HepG2 (cell line): ENCODE measurements at regions of chr6 and their contacts with region 1.

Region 1: DNA sequence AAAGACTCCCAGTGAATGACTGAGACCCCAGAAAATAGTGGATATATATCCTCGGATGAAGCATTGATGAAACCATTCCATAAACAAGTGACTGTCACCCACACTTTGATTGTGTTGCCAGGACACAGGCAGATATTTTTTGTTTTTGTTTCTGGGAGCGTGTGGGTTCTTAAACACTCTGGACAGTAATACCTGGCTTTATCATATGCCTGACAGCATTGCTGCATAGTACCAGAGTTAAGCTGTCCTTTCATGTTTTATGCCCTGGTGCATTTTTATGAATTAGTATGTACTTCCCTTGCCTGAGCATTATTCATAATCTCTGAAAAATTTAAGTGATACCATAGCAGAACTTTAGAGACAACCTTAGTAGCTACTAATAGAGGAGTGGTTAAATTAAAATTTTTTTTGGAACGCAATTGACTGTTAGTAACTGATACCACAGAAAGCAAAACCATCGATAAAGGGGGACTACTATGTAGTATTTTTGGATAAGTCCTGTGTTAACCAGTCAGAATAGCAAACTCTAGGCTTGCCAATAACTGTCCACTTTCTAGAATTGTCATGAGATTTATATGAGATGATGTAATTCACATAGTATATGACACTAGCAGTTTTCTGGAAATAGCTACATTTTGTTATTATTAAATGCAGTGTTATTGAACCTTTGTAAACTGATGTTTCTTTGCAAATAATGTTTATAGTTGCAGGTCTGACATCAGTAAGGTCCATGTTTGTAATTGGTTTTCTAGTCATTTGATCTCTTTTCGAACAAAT is 30.4 kb downstream of the SENP6 start:
- DNase-seq: no peak
- ATAC-seq: no peak
- H3K4me3 ChIP-seq: no peak overlapping the region
- H3K27ac ChIP-seq: no peak overlapping the region
- H3K4me1 ChIP-seq: no peaks in the 10 kb centered on the region
- H3K27me3 ChIP-seq: no peaks in the 10 kb centered on the region
- CTCF ChIP-seq: no peak
- EP300 ChIP-seq: no peak
- POLR2A ChIP-seq: no peak
- RAD21 ChIP-seq: no peak

Region 2: DNA sequence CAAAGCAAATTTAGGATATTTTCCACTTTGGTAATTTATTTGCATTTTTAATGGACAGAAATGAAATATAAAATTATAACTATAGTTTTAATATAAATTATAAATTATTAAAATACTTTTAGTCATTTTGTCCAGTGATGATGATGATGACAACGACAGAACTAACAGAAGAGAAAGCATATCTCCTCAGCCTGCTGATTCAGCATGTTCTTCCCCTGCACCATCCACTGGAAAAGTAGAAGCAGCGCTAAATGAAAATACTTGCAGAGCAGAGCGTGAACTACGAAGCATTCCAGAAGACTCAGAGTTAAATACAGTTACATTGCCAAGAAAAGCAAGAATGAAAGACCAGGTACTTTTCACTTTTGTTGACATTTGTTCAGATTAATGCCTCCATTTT is 34.5 kb after region 1 on chr6:
- CTCF ChIA-PET with region 1: no interaction called
- POLR2A ChIA-PET with region 1: no interaction called
- in situ Hi-C with region 1: no loop called
- intact Hi-C with region 1: loop called (anchors 2 kb)
- DNase-seq: no peak
- ATAC-seq: no peak
- H3K4me3 ChIP-seq: no peak overlapping the region
- H3K27ac ChIP-seq: no peak overlapping the region
- H3K4me1 ChIP-seq: no peaks in the 10 kb centered on the region
- H3K27me3 ChIP-seq: no peaks in the 10 kb centered on the region
- CTCF ChIP-seq: no peak
- EP300 ChIP-seq: no peak
- POLR2A ChIP-seq: no peak
- RAD21 ChIP-seq: no peak

Region 3: GRCh38 chr6:75723382-75723781 is 91.3 kb after region 1 on chr6:
- CTCF ChIA-PET with region 1: no interaction called
- POLR2A ChIA-PET with region 1: no interaction called
- in situ Hi-C with region 1: no loop called
- intact Hi-C with region 1: no loop called
- DNase-seq: no peak
- ATAC-seq: no peak
- H3K4me3 ChIP-seq: no peak overlapping the region
- H3K27ac ChIP-seq: no peak overlapping the region
- H3K4me1 ChIP-seq: peaks cover 6% of the 10 kb centered on the region; the same call in 1 of the 2 replicates
- H3K27me3 ChIP-seq: no peaks in the 10 kb centered on the region
- CTCF ChIP-seq: no peak
- EP300 ChIP-seq: no peak
- POLR2A ChIP-seq: no peak
- RAD21 ChIP-seq: no peak